ENCODE measurements at regions of chr2 and their contacts with region 1.

Region 1: DNA sequence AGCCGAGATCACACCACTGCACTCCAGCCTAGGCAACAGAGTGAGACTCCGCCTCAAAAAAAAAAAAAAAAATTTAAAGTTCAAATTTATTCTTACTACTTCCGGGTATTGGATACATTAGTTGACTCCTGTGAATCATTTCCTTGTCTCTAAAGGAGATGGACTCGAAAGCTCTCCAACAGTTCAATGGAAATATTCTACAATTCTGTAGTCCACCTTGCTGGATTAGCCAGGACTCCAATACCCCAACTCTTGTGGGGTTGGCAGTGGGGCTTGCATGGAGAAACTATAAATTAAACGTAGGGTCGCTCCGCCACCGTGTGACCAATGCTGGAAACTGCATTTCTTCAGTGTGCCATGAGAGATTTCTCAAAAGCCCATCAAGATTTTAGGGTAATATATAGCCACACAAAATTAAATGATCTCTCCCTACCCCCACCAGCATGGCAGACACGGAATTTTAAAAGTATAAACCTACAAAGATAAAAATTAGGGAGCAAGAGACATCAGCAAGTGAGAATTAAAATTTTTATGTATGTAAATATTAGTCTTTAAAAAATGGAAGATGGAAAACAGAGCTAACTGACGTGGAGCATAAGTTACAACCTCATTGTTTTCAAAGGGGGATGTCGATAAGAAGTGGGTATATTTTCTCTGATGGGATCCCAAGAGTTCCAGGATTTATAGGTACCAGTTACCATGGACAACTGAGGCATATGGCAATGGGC is 27.8 kb upstream of the GAREM2 start:
- DNase-seq: peak; percentile 62 to 65
- H3K4me3 ChIP-seq: no peak overlapping the region
- H3K27ac ChIP-seq: no peak overlapping the region
- H3K4me1 ChIP-seq: no peaks in the 10 kb centered on the region
- H3K27me3 ChIP-seq: no peaks in the 10 kb centered on the region
- CTCF ChIP-seq: peak; percentile 28 to 87 (median 70)
- POLR2A ChIP-seq: no peak

Region 2: GRCh38 chr2:25851740-25852503 is 293.2 kb before region 1 on chr2:
- intact Hi-C with region 1: loop called (anchors 5 kb)
- DNase-seq: no peak
- H3K4me3 ChIP-seq: no peak overlapping the region
- H3K27ac ChIP-seq: no peak overlapping the region
- H3K4me1 ChIP-seq: peaks cover 4 to 12% of the 10 kb centered on the region in 2 donors
- H3K27me3 ChIP-seq: no peaks in the 10 kb centered on the region
- CTCF ChIP-seq: peak in 5 of 6 experiments; percentile 36 to 77 (median 74)
- POLR2A ChIP-seq: no peak

Region 3: GRCh38 chr2:25951071-25951547 is 194.0 kb before region 1 on chr2:
- intact Hi-C with region 1: loop called (anchors 5 kb)
- DNase-seq: peak; percentile 71 to 72
- H3K4me3 ChIP-seq: no peak overlapping the region
- H3K27ac ChIP-seq: no peak overlapping the region
- H3K4me1 ChIP-seq: peaks cover 0 to 5% of the 10 kb centered on the region in 2 donors
- H3K27me3 ChIP-seq: no peaks in the 10 kb centered on the region
- CTCF ChIP-seq: peak; percentile 63 to 97 (median 92)
- POLR2A ChIP-seq: no peak

Region 4: GRCh38 chr2:25982273-25982967 is 162.7 kb before region 1 on chr2 and contains the start of gene KIF3C:
- intact Hi-C with region 1: loop called (anchors 10 kb)
- DNase-seq: peak; percentile 63 to 70
- H3K4me3 ChIP-seq: peak within 1 kb of the TSS; percentile 58 to 91 (median 75)
- H3K27ac ChIP-seq: peak within 1 kb of the TSS in 2 of 3 donors; percentile 12 to 56
- H3K4me1 ChIP-seq: peaks cover 7 to 16% of the 10 kb centered on the region in 2 donors
- H3K27me3 ChIP-seq: no peaks in the 10 kb centered on the region
- CTCF ChIP-seq: no peak
- POLR2A ChIP-seq: peak in 1 of 2 donors; percentile 8
- total RNA-seq, gene KIF3C: 9.9 to 13.8 (median 11.7) TPM

Region 5: DNA sequence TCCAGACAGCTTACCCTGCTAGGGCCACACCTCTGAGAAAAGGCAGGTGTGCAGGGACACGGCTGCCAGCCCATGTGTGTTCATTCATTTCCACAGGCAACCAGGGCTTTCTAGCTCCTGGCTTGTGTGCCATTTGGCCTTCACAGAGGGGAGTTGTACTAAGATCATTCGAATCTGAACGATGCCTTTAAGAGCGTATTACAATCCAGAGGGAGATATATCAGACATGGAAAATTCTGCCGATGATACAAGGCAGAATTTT is 397.0 kb after region 1 on chr2:
- intact Hi-C with region 1: no loop called
- DNase-seq: peak; percentile 18 to 23
- H3K4me3 ChIP-seq: no peak overlapping the region
- H3K27ac ChIP-seq: peak overlapping the region in 2 of 3 donors; percentile 57 to 70
- H3K4me1 ChIP-seq: peaks cover 24 to 29% of the 10 kb centered on the region in 2 donors
- H3K27me3 ChIP-seq: no peaks in the 10 kb centered on the region
- CTCF ChIP-seq: no peak
- POLR2A ChIP-seq: no peak

Region 6: GRCh38 chr2:26578113-26578458 is 433.0 kb after region 1 on chr2:
- intact Hi-C with region 1: no loop called
- DNase-seq: no peak
- H3K4me3 ChIP-seq: no peak overlapping the region
- H3K27ac ChIP-seq: no peak overlapping the region
- H3K4me1 ChIP-seq: no peaks in the 10 kb centered on the region
- H3K27me3 ChIP-seq: no peaks in the 10 kb centered on the region
- CTCF ChIP-seq: peak in 1 of 6 experiments; percentile 4
- POLR2A ChIP-seq: no peak

Measured in thyroid gland (tissue), 4 donors.